CD8-positive, alpha-beta T cell (primary cell): ENCODE measurements at regions of chr15 and their contacts with region 1.

Region 1: DNA sequence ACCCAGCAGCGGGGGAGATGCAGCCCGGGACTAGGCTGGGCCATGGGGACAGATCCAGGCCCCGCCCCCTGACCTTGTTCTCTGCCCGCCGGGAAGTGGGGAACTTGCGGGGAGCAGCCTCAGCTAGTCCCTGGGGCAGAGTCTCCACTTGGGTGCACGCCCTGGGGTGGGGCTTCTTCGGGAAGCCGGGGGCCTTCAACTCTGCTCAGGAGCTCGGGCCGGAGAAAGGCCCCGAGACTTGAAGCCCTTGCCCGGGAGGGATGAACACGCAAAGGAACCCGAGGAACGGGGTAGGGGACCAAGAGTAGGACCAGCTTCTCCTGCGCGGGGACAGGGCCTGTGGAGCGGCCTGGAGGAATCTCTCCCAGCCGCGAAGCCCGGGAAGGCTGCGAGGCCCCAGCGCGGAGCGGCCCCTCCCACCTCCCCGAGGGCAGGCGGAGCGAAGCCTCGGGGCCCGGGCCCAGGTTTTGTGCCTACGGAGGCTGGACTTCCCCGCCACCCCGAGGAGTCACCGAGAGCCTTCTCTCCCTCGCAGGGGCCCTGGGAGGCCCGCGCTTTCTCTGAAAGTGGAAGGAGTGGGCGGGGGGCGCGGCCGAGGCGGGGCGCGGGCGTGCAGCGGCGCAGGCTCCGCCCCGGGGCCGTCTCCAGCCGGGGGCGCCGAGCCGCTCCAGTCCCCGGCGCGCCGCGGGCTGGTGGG is at the start of gene ITPKA:
- DNase-seq: peak; percentile 38 to 87 (median 74)
- ATAC-seq: peak; percentile 82
- H3K4me3 ChIP-seq: peak within 1 kb of the TSS; percentile 64 to 75
- H3K4me3 Mint-ChIP-seq: peak within 1 kb of the TSS; percentile 79
- H3K27ac ChIP-seq: no peak within 1 kb of the TSS
- H3K27ac Mint-ChIP-seq: no peak within 1 kb of the TSS
- H3K4me1 ChIP-seq: peaks cover 31% of the 10 kb centered on the region
- H3K4me1 Mint-ChIP-seq: peaks cover 15% of the 10 kb centered on the region
- H3K27me3 ChIP-seq: peaks cover 33 to 54% of the 10 kb centered on the region in 2 experiments
- H3K27me3 Mint-ChIP-seq: peaks cover 38% of the 10 kb centered on the region
- CTCF ChIP-seq: no peak
- total RNA-seq, gene ITPKA: 0.50 TPM in 1 of 2 experiments, not detected in the other

Region 2: GRCh38 chr15:41169781-41170180 is 323.6 kb before region 1 on chr15:
- CTCF ChIA-PET with region 1: no interaction called
- POLR2A ChIA-PET with region 1: no interaction called
- intact Hi-C with region 1: no loop called
- DNase-seq: no peak
- ATAC-seq: no peak
- H3K4me3 ChIP-seq: no peak overlapping the region
- H3K4me3 Mint-ChIP-seq: no peak overlapping the region
- H3K27ac ChIP-seq: no peak overlapping the region
- H3K27ac Mint-ChIP-seq: no peak overlapping the region
- H3K4me1 ChIP-seq: no peaks in the 10 kb centered on the region
- H3K4me1 Mint-ChIP-seq: no peaks in the 10 kb centered on the region
- H3K27me3 ChIP-seq: no peaks in the 10 kb centered on the region
- H3K27me3 Mint-ChIP-seq: peaks cover 6% of the 10 kb centered on the region
- CTCF ChIP-seq: no peak

Region 3: GRCh38 chr15:41544650-41545015 is 51.3 kb after region 1 on chr15:
- CTCF ChIA-PET with region 1: no interaction called
- POLR2A ChIA-PET with region 1: interaction called, 3 read pairs
- intact Hi-C with region 1: loop called (anchors 1 to 5 kb)
- DNase-seq: peak in 7 of 9 experiments; percentile 16 to 61 (median 55)
- ATAC-seq: peak; percentile 30
- H3K4me3 ChIP-seq: peak overlapping the region; percentile 88 to 95
- H3K4me3 Mint-ChIP-seq: peak overlapping the region; percentile 91
- H3K27ac ChIP-seq: peak overlapping the region in 1 of 2 experiments; percentile 64
- H3K27ac Mint-ChIP-seq: peak overlapping the region; percentile 95
- H3K4me1 ChIP-seq: peaks cover 8% of the 10 kb centered on the region
- H3K4me1 Mint-ChIP-seq: peaks cover 18% of the 10 kb centered on the region
- H3K27me3 ChIP-seq: no peaks in the 10 kb centered on the region
- H3K27me3 Mint-ChIP-seq: no peaks in the 10 kb centered on the region
- CTCF ChIP-seq: no peak